GM12878 (cell line): ENCODE measurements at regions of chr11 and their contacts with region 1.

Region 1: DNA sequence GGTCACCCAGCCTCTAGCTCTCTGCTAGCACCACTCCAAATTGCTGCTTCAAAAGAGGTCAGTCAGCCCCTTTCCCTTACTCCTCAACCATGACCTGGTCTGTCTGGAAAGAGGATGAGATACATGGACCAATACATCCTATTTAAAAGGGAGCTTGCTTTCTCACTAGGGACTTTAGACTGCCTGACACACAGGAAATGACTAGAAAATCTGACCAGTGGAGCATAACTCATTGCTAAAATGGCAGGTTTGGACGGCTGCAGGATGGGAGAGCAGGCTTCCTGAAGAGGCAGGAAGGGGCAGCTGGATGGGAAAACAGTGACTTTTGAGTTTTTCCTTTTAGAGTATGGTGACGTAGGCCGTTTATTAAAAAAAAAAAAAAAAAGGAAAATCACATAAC is 25.3 kb downstream of the STIM1 start:
- DNase-seq: no peak
- ATAC-seq: peak; percentile 70
- H3K4me3 ChIP-seq: peak overlapping the region; percentile 46
- H3K27ac ChIP-seq: peak overlapping the region; percentile 83
- H3K4me1 ChIP-seq: peaks cover 65% of the 10 kb centered on the region
- H3K27me3 ChIP-seq: no peaks in the 10 kb centered on the region
- CTCF ChIP-seq: no peak
- EP300 ChIP-seq: no peak
- POLR2A ChIP-seq: 0 out of 2 replicates have a peak, but pooled peaks have one; percentile 19
- RAD21 ChIP-seq: no peak

Region 2: DNA sequence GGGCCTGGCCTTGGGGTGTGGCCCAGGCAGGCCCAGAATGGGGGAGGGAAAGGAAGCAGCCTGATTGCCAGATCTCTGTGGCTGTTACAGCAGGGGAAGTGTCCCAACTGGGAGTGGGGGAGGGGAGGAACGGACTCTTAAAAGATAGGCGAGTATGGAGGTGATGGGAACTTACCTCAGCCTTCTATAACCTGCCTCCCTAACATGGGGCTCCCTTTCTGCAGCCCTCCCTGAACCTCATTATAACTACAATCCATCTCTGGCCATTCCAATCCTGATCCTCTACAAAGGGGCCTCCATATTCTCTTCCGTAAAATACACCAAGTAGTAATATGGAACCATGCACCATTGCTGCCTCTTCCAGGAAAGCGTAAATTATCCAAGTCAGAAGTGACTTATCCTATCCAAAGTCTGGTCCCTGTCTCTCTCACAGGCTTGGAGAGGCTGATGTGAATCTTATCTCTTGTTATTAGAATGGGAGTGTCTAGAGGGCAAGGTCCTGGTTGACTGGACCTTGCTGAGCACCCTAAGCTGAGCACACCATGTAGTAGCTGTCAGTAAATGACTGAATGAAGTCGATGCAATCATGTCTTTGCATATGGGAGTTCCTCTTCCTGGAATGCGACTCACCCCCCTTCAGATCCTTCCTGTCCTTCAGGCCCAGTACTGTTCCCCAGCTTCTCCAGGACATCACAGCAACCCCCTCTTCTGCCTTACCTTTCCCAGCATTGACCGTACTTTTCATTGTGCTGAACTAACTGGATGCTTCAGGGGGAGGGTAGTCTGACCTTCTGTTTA is 45.9 kb before region 1 on chr11:
- CTCF ChIA-PET with region 1: interaction called, 1,047 read pairs
- POLR2A ChIA-PET with region 1: interaction called, 52 read pairs
- RAD21 ChIA-PET with region 1: interaction called, 16 read pairs
- SMC1A ChIA-PET with region 1: interaction called, 7 read pairs
- in situ Hi-C with region 1: no loop called
- intact Hi-C with region 1: no loop called
- DNase-seq: no peak
- ATAC-seq: peak; percentile 2; the same call in 1 of the 3 replicates
- H3K4me3 ChIP-seq: peak overlapping the region; percentile 37
- H3K27ac ChIP-seq: peak overlapping the region; percentile 50
- H3K4me1 ChIP-seq: peaks cover 41% of the 10 kb centered on the region
- H3K27me3 ChIP-seq: no peaks in the 10 kb centered on the region
- CTCF ChIP-seq: no peak
- EP300 ChIP-seq: no peak
- POLR2A ChIP-seq: no peak
- RAD21 ChIP-seq: no peak

Region 3: GRCh38 chr11:3867209-3868091 is 13.3 kb before region 1 on chr11:
- CTCF ChIA-PET with region 1: interaction called, 1,047 read pairs
- POLR2A ChIA-PET with region 1: interaction called, 405 read pairs
- RAD21 ChIA-PET with region 1: interaction called, 114 read pairs
- SMC1A ChIA-PET with region 1: interaction called, 633 read pairs
- in situ Hi-C with region 1: no loop called
- intact Hi-C with region 1: no loop called
- DNase-seq: peak; percentile 66
- ATAC-seq: peak; percentile 57
- H3K4me3 ChIP-seq: peak overlapping the region; percentile 28; the same call in 1 of the 2 replicates
- H3K27ac ChIP-seq: peak overlapping the region; percentile 82
- H3K4me1 ChIP-seq: peaks cover 65% of the 10 kb centered on the region
- H3K27me3 ChIP-seq: no peaks in the 10 kb centered on the region
- CTCF ChIP-seq: no peak
- EP300 ChIP-seq: no peak
- POLR2A ChIP-seq: no peak
- RAD21 ChIP-seq: no peak

Region 4: DNA sequence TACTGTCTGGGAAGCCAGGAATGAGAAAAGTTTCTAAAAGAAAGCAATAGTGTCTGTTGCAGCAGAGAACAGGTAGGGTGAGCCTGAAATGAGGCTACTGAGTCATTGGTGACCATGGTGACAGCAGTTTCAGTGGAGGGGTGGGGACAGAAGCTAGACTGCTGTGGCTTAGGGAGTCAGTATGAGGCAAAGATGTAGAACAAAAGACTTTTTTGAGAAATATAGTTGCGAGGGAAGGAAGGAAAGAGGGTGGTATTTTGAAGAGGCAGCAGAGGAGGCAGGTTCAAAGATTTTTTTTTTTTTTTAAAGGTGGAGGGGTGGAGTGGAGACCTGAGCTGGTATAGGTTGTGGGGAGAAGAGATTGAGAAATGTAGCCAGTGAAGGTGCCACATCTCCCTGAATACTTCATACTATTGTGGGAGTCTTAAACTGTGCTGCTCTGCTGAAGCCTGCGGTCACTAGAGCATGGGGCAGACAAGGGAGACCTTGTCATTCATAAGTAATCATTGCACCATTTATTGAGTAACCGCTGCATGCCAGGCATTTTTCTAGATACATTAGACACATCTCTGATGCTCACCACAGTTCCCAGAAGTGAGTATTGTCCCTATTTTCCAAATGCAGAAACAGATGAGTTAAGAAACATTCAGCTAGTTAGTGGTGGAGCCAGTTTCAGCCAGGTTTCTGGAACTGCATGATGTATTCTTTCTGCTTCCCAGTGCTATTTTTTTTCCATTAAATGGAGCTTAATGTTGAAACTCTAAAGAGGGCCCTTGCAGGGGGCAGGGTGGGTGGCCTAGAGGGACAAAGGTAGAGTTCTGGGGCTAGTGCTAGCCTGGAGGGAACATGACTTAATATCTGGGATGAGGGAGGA is 24.6 kb after region 1 on chr11:
- CTCF ChIA-PET with region 1: interaction called, 5 read pairs
- POLR2A ChIA-PET with region 1: interaction called, 15 read pairs
- RAD21 ChIA-PET with region 1: interaction called, 5 read pairs
- SMC1A ChIA-PET with region 1: interaction called, 11 read pairs
- in situ Hi-C with region 1: no loop called
- intact Hi-C with region 1: no loop called
- DNase-seq: no peak
- ATAC-seq: peak; percentile 89
- H3K4me3 ChIP-seq: no peak overlapping the region
- H3K27ac ChIP-seq: no peak overlapping the region
- H3K4me1 ChIP-seq: peaks cover 51% of the 10 kb centered on the region
- H3K27me3 ChIP-seq: no peaks in the 10 kb centered on the region
- CTCF ChIP-seq: no peak
- EP300 ChIP-seq: no peak
- POLR2A ChIP-seq: no peak
- RAD21 ChIP-seq: no peak

Region 5: GRCh38 chr11:3995949-3996554 is 115.3 kb after region 1 on chr11:
- CTCF ChIA-PET with region 1: no interaction called
- POLR2A ChIA-PET with region 1: no interaction called
- RAD21 ChIA-PET with region 1: no interaction called
- SMC1A ChIA-PET with region 1: no interaction called
- in situ Hi-C with region 1: no loop called
- intact Hi-C with region 1: no loop called
- DNase-seq: no peak
- ATAC-seq: no peak
- H3K4me3 ChIP-seq: no peak overlapping the region
- H3K27ac ChIP-seq: no peak overlapping the region
- H3K4me1 ChIP-seq: no peaks in the 10 kb centered on the region
- H3K27me3 ChIP-seq: no peaks in the 10 kb centered on the region
- CTCF ChIP-seq: no peak
- EP300 ChIP-seq: no peak
- POLR2A ChIP-seq: no peak
- RAD21 ChIP-seq: no peak

Region 6: GRCh38 chr11:4060182-4060923 is 179.6 kb after region 1 on chr11:
- CTCF ChIA-PET with region 1: interaction called, 4 read pairs
- POLR2A ChIA-PET with region 1: interaction called, 3 read pairs
- RAD21 ChIA-PET with region 1: interaction called, 3 read pairs
- SMC1A ChIA-PET with region 1: interaction called, 11 read pairs
- in situ Hi-C with region 1: no loop called
- intact Hi-C with region 1: no loop called
- DNase-seq: no peak
- ATAC-seq: no peak
- H3K4me3 ChIP-seq: no peak overlapping the region
- H3K27ac ChIP-seq: no peak overlapping the region
- H3K4me1 ChIP-seq: peaks cover 19% of the 10 kb centered on the region
- H3K27me3 ChIP-seq: no peaks in the 10 kb centered on the region
- CTCF ChIP-seq: no peak
- EP300 ChIP-seq: no peak
- POLR2A ChIP-seq: no peak
- RAD21 ChIP-seq: no peak